Naive thymus-derived CD4-positive, alpha-beta T cell (primary cell): ENCODE measurements at regions of chr4 and their contacts with region 1.

Region 1: GRCh38 chr4:121950212-121950679 is 1.6 kb downstream of the TRPC3 start:
- DNase-seq: peak; percentile 53 to 88 (median 68)
- ATAC-seq: peak; percentile 87
- H3K4me3 ChIP-seq: peak overlapping the region; percentile 50
- H3K4me3 Mint-ChIP-seq: peak overlapping the region; percentile 84 to 95 (median 88)
- H3K27ac ChIP-seq: no peak overlapping the region
- H3K27ac Mint-ChIP-seq: peak overlapping the region in 4 of 9 donors; percentile 10 to 45 (median 20)
- H3K4me1 ChIP-seq: no peaks in the 10 kb centered on the region
- H3K4me1 Mint-ChIP-seq: peaks cover 0 to 26% (median 17%) of the 10 kb centered on the region in 7 donors
- H3K27me3 ChIP-seq: peaks cover 0 to 11% of the 10 kb centered on the region in 2 donors
- H3K27me3 Mint-ChIP-seq: peaks cover 32 to 65% (median 47%) of the 10 kb centered on the region in 5 donors

Region 2: GRCh38 chr4:122003335-122003734 is 53.1 kb after region 1 on chr4:
- CTCF ChIA-PET with region 1: no interaction called
- POLR2A ChIA-PET with region 1: no interaction called
- intact Hi-C with region 1: loop called (anchors 1 kb)
- DNase-seq: peak in 5 of 9 donors; percentile 2 to 25 (median 7)
- ATAC-seq: peak; percentile 60
- H3K4me3 ChIP-seq: no peak overlapping the region
- H3K4me3 Mint-ChIP-seq: no peak overlapping the region
- H3K27ac ChIP-seq: no peak overlapping the region
- H3K27ac Mint-ChIP-seq: no peak overlapping the region
- H3K4me1 ChIP-seq: no peaks in the 10 kb centered on the region
- H3K4me1 Mint-ChIP-seq: peaks cover 0 to 8% (median 0%) of the 10 kb centered on the region in 7 donors
- H3K27me3 ChIP-seq: peaks cover 0 to 2% of the 10 kb centered on the region in 2 donors
- H3K27me3 Mint-ChIP-seq: peaks cover 14 to 22% (median 17%) of the 10 kb centered on the region in 5 donors

Region 3: DNA sequence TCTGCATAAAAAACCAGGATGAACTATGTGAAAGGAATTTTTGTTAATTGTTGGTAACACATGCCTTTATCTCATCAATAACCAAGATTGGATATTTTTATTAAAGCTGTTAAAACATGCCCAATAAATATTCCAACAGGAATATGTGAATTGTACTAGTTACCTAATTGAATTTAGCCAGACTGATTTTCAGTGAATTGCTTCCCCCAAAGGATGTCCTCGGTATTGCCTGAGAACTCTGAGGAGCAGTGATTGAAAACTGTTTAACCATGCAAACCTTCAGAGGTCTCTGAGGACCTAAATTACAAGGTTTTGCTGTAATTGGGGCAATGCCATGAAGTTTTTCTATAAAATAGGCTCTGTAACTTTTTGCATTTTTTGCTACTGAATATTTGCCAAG is 268.5 kb after region 1 on chr4:
- CTCF ChIA-PET with region 1: no interaction called
- POLR2A ChIA-PET with region 1: no interaction called
- intact Hi-C with region 1: loop called (anchors 1 to 2 kb)
- DNase-seq: peak in 1 of 9 donors; percentile 4
- ATAC-seq: no peak
- H3K4me3 ChIP-seq: no peak overlapping the region
- H3K4me3 Mint-ChIP-seq: no peak overlapping the region
- H3K27ac ChIP-seq: no peak overlapping the region
- H3K27ac Mint-ChIP-seq: no peak overlapping the region
- H3K4me1 ChIP-seq: no peaks in the 10 kb centered on the region
- H3K4me1 Mint-ChIP-seq: peaks cover 0 to 46% (median 23%) of the 10 kb centered on the region in 7 donors
- H3K27me3 ChIP-seq: no peaks in the 10 kb centered on the region
- H3K27me3 Mint-ChIP-seq: no peaks in the 10 kb centered on the region

Region 4: GRCh38 chr4:122716825-122717448 is 766.7 kb after region 1 on chr4:
- CTCF ChIA-PET with region 1: no interaction called
- POLR2A ChIA-PET with region 1: no interaction called
- intact Hi-C with region 1: loop called (anchors 1 to 5 kb)
- DNase-seq: peak; percentile 20 to 70 (median 63)
- ATAC-seq: peak; percentile 96
- H3K4me3 ChIP-seq: no peak overlapping the region
- H3K4me3 Mint-ChIP-seq: no peak overlapping the region
- H3K27ac ChIP-seq: no peak overlapping the region
- H3K27ac Mint-ChIP-seq: peak overlapping the region in 1 of 9 donors; percentile 46
- H3K4me1 ChIP-seq: peaks cover 0 to 5% of the 10 kb centered on the region in 2 donors
- H3K4me1 Mint-ChIP-seq: peaks cover 0 to 37% (median 12%) of the 10 kb centered on the region in 7 donors
- H3K27me3 ChIP-seq: no peaks in the 10 kb centered on the region
- H3K27me3 Mint-ChIP-seq: peaks cover 0 to 2% (median 0%) of the 10 kb centered on the region in 5 donors